ENCODE measurements at regions of chr2 and their contacts with region 1.

Region 1: DNA sequence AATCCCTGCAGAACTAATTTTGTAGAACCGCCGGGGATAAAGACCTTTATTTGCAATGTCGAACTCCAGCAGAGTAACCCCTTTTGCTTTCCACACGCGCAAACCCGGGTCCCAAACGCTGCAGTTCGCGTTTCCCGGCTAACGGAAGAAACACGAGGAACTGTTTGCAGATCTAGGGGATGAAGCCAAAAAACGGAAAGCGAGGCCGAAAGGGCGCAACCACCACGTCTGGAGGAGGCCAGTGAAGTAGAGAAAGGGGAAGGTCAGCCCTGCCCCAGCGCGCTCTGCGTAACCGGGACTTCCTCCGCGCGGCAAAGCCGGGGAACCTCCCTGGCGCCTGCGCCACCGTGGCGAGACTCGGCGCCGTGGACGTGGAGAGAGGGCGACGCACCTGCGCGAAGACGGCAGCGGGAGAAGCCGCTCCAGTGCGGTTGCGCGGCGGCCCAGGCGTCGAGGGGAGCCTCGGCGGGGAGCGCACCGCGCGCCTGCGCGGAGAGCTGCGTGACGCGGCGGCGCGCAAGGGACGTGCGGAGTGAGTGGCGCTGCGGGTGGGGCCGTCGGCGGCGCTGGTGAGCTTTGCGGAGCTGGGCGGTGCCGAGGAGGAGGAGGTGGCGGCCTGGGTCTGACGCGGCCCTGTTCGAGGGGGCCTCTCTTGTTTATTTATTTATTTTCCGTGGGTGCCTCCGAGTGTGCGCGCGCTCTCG is at the start of gene PPP1CB:
- DNase-seq: peak; percentile 99
- H3K4me3 ChIP-seq: peak within 1 kb of the TSS; percentile 69 to 92 (median 83)
- H3K27ac ChIP-seq: peak within 1 kb of the TSS; percentile 98 to 100 (median 100)
- H3K4me1 ChIP-seq: peaks cover 26 to 70% (median 50%) of the 10 kb centered on the region in 6 donors
- H3K27me3 ChIP-seq: no peaks in the 10 kb centered on the region
- CTCF ChIP-seq: peak in 10 of 11 experiments; percentile 5 to 73 (median 45)
- POLR2A ChIP-seq: peak; percentile 69 to 85 (median 79)
- total RNA-seq, gene PPP1CB: 162 to 244 (median 214) TPM

Region 2: GRCh38 chr2:28594289-28595108 is 156.9 kb before region 1 on chr2:
- intact Hi-C with region 1: loop called (anchors 10 kb)
- DNase-seq: peak; percentile 95
- H3K4me3 ChIP-seq: peak overlapping the region in 1 of 8 donors; percentile 50
- H3K27ac ChIP-seq: peak overlapping the region in 6 of 8 donors; percentile 15 to 86 (median 70)
- H3K4me1 ChIP-seq: peaks cover 9 to 21% (median 13%) of the 10 kb centered on the region in 6 donors
- H3K27me3 ChIP-seq: no peaks in the 10 kb centered on the region
- CTCF ChIP-seq: peak; percentile 62 to 89 (median 84)
- POLR2A ChIP-seq: no peak

Region 3: GRCh38 chr2:28880193-28880592 is 128.8 kb after region 1 on chr2:
- intact Hi-C with region 1: no loop called
- DNase-seq: no peak
- H3K4me3 ChIP-seq: no peak overlapping the region
- H3K27ac ChIP-seq: no peak overlapping the region
- H3K4me1 ChIP-seq: no peaks in the 10 kb centered on the region
- H3K27me3 ChIP-seq: peaks cover 0 to 14% (median 0%) of the 10 kb centered on the region in 7 donors
- CTCF ChIP-seq: no peak
- POLR2A ChIP-seq: no peak

Region 4: DNA sequence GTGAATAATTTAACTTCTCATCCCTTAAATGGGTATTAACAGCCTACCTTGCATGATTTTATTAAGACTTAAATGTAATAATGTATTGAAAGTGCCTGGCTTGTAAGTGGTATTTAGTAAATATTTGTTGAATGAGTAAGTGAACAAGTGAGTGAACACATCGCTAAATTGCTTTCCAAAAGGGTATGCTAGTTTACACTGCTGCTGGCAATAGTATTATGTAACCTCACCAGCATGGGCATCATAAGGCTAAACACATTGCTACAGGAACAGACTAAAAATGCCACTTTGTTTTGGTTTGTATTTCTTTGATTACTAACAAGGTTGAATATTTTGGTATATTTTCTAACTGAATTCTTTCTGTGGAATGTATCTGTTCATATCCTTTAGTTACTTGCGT is 152.9 kb after region 1 on chr2:
- intact Hi-C with region 1: no loop called
- DNase-seq: no peak
- H3K4me3 ChIP-seq: no peak overlapping the region
- H3K27ac ChIP-seq: no peak overlapping the region
- H3K4me1 ChIP-seq: peaks cover 0 to 38% (median 9%) of the 10 kb centered on the region in 6 donors
- H3K27me3 ChIP-seq: no peaks in the 10 kb centered on the region
- CTCF ChIP-seq: no peak
- POLR2A ChIP-seq: no peak

Measured in spleen (tissue), 13 donors.